ENCODE measurements at regions of chrX and their contacts with region 1.

Region 1: GRCh38 chrX:16683007-16683664 is 29.3 kb downstream of the CTPS2 start:
- H3K4me3 ChIP-seq: no peak overlapping the region
- H3K27ac ChIP-seq: no peak overlapping the region
- H3K4me1 ChIP-seq: no peaks in the 10 kb centered on the region
- CTCF ChIP-seq: no peak

Region 2: GRCh38 chrX:16666541-16666940 is 16.6 kb before region 1 on chrX:
- CTCF ChIA-PET with region 1: no interaction called
- POLR2A ChIA-PET with region 1: no interaction called
- H3K4me3 ChIP-seq: no peak overlapping the region
- H3K27ac ChIP-seq: no peak overlapping the region
- H3K4me1 ChIP-seq: no peaks in the 10 kb centered on the region
- CTCF ChIP-seq: no peak

Region 3: GRCh38 chrX:16695079-16695676 is 12.0 kb after region 1 on chrX:
- CTCF ChIA-PET with region 1: interaction called, 12 read pairs
- POLR2A ChIA-PET with region 1: no interaction called
- H3K4me3 ChIP-seq: no peak overlapping the region
- H3K27ac ChIP-seq: no peak overlapping the region
- H3K4me1 ChIP-seq: no peaks in the 10 kb centered on the region
- CTCF ChIP-seq: peak; percentile 38; the same call in 1 of the 2 replicates

Measured in HEK293 (cell line).